Endothelial cell of umbilical vein (primary cell): ENCODE measurements at regions of chr21 and their contacts with region 1.

Region 1: DNA sequence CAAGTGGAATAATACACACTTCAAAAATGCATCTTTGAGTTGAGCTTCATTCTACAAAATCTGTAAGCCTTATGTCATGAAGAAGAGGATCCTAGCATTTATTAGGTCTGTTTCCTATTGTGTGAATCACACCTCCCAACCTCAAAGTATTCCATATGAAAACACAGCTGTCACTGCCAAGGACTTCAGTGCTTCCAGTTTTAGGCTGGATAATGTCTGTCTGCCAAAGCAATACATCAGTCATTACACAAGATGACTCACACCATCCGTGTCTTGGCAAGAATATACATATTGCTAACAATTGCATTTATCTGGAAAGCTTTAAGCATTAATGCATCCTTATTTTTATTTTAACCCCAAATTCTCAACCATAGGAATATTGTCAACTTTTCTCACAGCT is 125.7 kb upstream of the TMPRSS15 start:
- DNase-seq: peak; percentile 91
- H3K4me3 ChIP-seq: no peak overlapping the region
- H3K27ac ChIP-seq: no peak overlapping the region
- H3K4me1 ChIP-seq: peaks cover 8% of the 10 kb centered on the region
- H3K27me3 ChIP-seq: no peaks in the 10 kb centered on the region
- CTCF ChIP-seq: no peak
- POLR2A ChIP-seq: no peak

Region 2: DNA sequence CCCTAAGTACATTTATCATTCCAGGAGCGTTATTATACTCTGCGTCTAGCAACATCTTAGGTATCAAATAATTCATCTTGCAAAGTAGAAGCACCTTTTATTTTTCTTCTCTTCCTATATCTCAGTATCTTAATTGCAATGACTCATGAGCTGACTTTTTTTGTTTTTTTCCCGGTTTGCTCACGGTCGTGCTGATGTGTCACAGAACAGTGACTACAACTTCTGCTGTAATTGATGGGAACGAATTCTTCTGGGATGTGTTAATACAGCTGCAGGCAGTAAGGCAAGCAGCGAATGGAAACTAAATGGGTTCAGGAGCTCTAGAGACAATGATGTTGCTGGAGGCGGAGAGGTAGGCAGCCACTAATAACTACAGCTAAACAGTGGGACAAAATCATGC is 35.8 kb before region 1 on chr21:
- CTCF ChIA-PET with region 1: interaction called, 3 read pairs
- POLR2A ChIA-PET with region 1: no interaction called
- dilution Hi-C with region 1: no loop called
- intact Hi-C with region 1: loop called (anchors 1 kb)
- DNase-seq: peak; percentile 54
- H3K4me3 ChIP-seq: no peak overlapping the region
- H3K27ac ChIP-seq: peak overlapping the region; percentile 41
- H3K4me1 ChIP-seq: peaks cover 2% of the 10 kb centered on the region
- H3K27me3 ChIP-seq: no peaks in the 10 kb centered on the region
- CTCF ChIP-seq: no peak
- POLR2A ChIP-seq: no peak